HepG2 (cell line): ENCODE measurements at regions of chr20 and their contacts with region 1.

Region 1: DNA sequence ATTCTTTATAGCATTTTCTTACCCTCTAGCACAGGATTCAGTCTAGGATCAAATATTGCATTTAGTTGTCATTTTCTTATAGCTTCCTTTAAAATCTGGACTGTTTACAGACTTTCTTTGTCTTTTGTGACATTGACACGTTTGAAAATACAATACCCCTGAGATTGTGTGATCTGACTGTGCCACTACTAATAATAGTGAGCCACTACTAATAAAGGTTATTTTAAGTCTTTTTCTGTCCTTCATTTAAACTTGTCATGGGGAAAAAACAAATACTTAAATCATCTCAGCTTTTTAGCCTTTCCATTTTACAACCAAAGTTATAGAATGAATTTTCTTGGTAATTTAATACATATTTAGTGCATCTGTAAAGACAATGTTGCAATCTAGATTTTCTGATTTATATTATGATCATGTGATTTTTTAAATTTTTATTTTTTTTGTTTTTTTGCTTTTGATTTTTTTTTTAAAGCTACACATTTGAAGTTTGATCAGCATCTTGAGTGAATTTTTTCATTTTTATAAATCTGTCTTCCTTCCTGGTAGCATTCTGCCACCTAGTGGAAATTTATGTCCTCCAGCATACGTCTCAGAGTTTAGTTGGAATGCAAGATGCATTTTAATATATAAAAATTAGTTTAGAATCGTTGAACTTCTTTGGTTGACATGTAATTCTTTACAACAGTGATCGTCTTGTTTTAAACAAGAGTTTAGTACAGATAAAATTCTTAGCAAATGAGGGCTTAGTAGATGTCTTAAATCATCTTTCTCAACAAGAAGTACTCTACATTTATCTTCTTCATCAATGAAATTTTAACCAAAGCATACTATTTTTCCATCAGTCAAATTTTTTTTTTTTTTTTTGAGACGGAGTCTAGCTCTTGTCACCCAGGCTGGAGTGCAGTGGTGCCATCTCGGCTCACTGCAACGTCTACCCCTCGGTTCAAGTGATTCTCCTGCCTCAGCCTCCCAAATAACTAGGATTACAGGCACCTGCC is 119.4 kb downstream of the NCOA3 start:
- DNase-seq: peak; percentile 66
- ATAC-seq: 0 out of 3 replicates have a peak, but pooled peaks have one; percentile 33
- H3K4me3 ChIP-seq: no peak overlapping the region
- H3K27ac ChIP-seq: no peak overlapping the region
- H3K4me1 ChIP-seq: no peaks in the 10 kb centered on the region
- H3K27me3 ChIP-seq: no peaks in the 10 kb centered on the region
- CTCF ChIP-seq: peak; percentile 72
- EP300 ChIP-seq: no peak
- POLR2A ChIP-seq: no peak
- RAD21 ChIP-seq: peak; percentile 79

Region 2: GRCh38 chr20:47196091-47197081 is 424.7 kb before region 1 on chr20:
- CTCF ChIA-PET with region 1: interaction called, 7 read pairs
- POLR2A ChIA-PET with region 1: no interaction called
- in situ Hi-C with region 1: loop called (anchors 10 kb)
- intact Hi-C with region 1: loop called (anchors 2 kb)
- DNase-seq: peak; percentile 70
- ATAC-seq: peak; percentile 56
- H3K4me3 ChIP-seq: peak overlapping the region; percentile 15 to 64 (median 44); a peak in 5 of 6 replicates
- H3K27ac ChIP-seq: no peak overlapping the region
- H3K4me1 ChIP-seq: peaks cover 41% of the 10 kb centered on the region
- H3K27me3 ChIP-seq: peaks cover 0 to 7% of the 10 kb centered on the region in 2 experiments; a peak in 3 of 5 replicates
- CTCF ChIP-seq: peak; percentile 99
- EP300 ChIP-seq: no peak
- POLR2A ChIP-seq: no peak
- RAD21 ChIP-seq: peak; percentile 99

Region 3: GRCh38 chr20:47272893-47273590 is 348.1 kb before region 1 on chr20:
- CTCF ChIA-PET with region 1: interaction called, 3 read pairs
- POLR2A ChIA-PET with region 1: no interaction called
- in situ Hi-C with region 1: no loop called
- intact Hi-C with region 1: loop called (anchors 2 kb)
- DNase-seq: peak; percentile 78
- ATAC-seq: peak; percentile 63
- H3K4me3 ChIP-seq: no peak overlapping the region
- H3K27ac ChIP-seq: no peak overlapping the region
- H3K4me1 ChIP-seq: peaks cover 23% of the 10 kb centered on the region
- H3K27me3 ChIP-seq: no peaks in the 10 kb centered on the region
- CTCF ChIP-seq: peak; percentile 91
- EP300 ChIP-seq: no peak
- POLR2A ChIP-seq: no peak
- RAD21 ChIP-seq: peak; percentile 86

Region 4: GRCh38 chr20:47379433-47380150 is 241.5 kb before region 1 on chr20:
- CTCF ChIA-PET with region 1: interaction called, 9 read pairs
- POLR2A ChIA-PET with region 1: no interaction called
- in situ Hi-C with region 1: no loop called
- intact Hi-C with region 1: loop called (anchors 5 kb)
- DNase-seq: no peak
- ATAC-seq: peak; percentile 9; the same call in 2 of the 3 replicates
- H3K4me3 ChIP-seq: no peak overlapping the region
- H3K27ac ChIP-seq: no peak overlapping the region
- H3K4me1 ChIP-seq: peaks cover 45% of the 10 kb centered on the region
- H3K27me3 ChIP-seq: no peaks in the 10 kb centered on the region
- CTCF ChIP-seq: no peak
- EP300 ChIP-seq: no peak
- POLR2A ChIP-seq: no peak
- RAD21 ChIP-seq: no peak

Region 5: DNA sequence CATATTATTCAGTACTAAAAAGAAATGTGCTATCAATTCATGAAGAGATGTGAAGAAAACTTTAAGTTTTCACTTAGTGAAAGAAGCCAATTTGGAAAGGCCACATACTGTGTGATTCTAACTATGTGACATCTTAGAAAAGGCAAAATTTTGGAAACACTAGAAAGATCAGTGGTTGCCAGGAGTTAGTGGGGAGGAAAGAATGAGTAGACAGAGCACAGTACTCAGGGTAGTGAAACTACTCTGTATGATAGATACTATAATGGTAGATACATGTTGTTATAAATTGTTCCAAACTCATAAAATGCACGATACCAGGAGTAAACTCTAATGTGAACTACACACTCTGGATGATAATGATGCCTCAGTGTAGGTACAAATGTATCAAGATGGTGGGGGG is 105.3 kb before region 1 on chr20:
- CTCF ChIA-PET with region 1: interaction called, 11 read pairs
- POLR2A ChIA-PET with region 1: no interaction called
- in situ Hi-C with region 1: loop called (anchors 5 kb)
- intact Hi-C with region 1: loop called (anchors 5 kb)
- DNase-seq: no peak
- ATAC-seq: no peak
- H3K4me3 ChIP-seq: no peak overlapping the region
- H3K27ac ChIP-seq: no peak overlapping the region
- H3K4me1 ChIP-seq: peaks cover 38% of the 10 kb centered on the region
- H3K27me3 ChIP-seq: no peaks in the 10 kb centered on the region
- CTCF ChIP-seq: no peak
- EP300 ChIP-seq: no peak
- POLR2A ChIP-seq: no peak
- RAD21 ChIP-seq: no peak

Region 6: GRCh38 chr20:47521059-47521808 is 99.9 kb before region 1 on chr20:
- CTCF ChIA-PET with region 1: interaction called, 11 read pairs
- POLR2A ChIA-PET with region 1: no interaction called
- in situ Hi-C with region 1: loop called (anchors 5 kb)
- intact Hi-C with region 1: loop called (anchors 5 kb)
- DNase-seq: no peak
- ATAC-seq: peak; percentile 67
- H3K4me3 ChIP-seq: no peak overlapping the region
- H3K27ac ChIP-seq: no peak overlapping the region
- H3K4me1 ChIP-seq: 0 out of 2 replicates have a peak, but pooled peaks cover 7% of the 10 kb centered on the region
- H3K27me3 ChIP-seq: no peaks in the 10 kb centered on the region
- CTCF ChIP-seq: peak; percentile 77
- EP300 ChIP-seq: no peak
- POLR2A ChIP-seq: no peak
- RAD21 ChIP-seq: peak; percentile 62

Region 7: DNA sequence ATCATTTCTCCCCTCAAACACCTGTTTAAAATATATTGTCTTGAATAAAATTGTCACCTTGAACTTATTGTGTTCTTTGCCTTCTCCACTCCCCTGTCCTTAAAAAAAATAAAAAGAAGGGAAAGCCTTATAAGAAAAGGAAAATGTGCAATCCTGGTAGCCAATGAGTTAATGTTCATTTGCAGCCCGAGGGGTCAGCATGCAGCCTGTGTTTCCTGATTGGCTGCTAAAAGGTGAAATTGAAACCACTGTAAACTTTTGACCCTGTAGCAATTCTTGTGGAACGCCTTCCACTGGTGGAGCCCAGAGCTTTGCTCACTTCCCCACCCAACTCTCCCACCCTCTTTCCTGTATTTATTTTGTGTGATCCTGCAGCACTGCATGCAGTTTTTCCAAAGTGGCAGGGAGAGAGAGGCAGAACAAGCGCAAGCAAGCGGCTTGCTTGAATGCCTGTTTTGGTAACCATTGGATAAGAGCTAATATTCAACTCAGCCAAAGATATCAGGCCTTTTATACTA is 44.5 kb before region 1 on chr20:
- CTCF ChIA-PET with region 1: no interaction called
- POLR2A ChIA-PET with region 1: no interaction called
- in situ Hi-C with region 1: no loop called
- intact Hi-C with region 1: loop called (anchors 5 kb)
- DNase-seq: peak; percentile 97
- ATAC-seq: peak; percentile 98
- H3K4me3 ChIP-seq: peak overlapping the region; percentile 22 to 49 (median 44); a peak in 4 of 6 replicates
- H3K27ac ChIP-seq: peak overlapping the region; percentile 51
- H3K4me1 ChIP-seq: peaks cover 97% of the 10 kb centered on the region
- H3K27me3 ChIP-seq: no peaks in the 10 kb centered on the region
- CTCF ChIP-seq: peak; percentile 31
- EP300 ChIP-seq: peak; percentile 70 to 72
- POLR2A ChIP-seq: peak; percentile 41 to 48; a peak in 2 of 4 replicates
- RAD21 ChIP-seq: no peak

Region 8: GRCh38 chr20:47767972-47768794 is 147.1 kb after region 1 on chr20:
- CTCF ChIA-PET with region 1: no interaction called
- POLR2A ChIA-PET with region 1: no interaction called
- in situ Hi-C with region 1: no loop called
- intact Hi-C with region 1: no loop called
- DNase-seq: no peak
- ATAC-seq: peak; percentile 22
- H3K4me3 ChIP-seq: no peak overlapping the region
- H3K27ac ChIP-seq: no peak overlapping the region
- H3K4me1 ChIP-seq: peaks cover 8% of the 10 kb centered on the region
- H3K27me3 ChIP-seq: no peaks in the 10 kb centered on the region
- CTCF ChIP-seq: no peak
- EP300 ChIP-seq: no peak
- POLR2A ChIP-seq: no peak
- RAD21 ChIP-seq: no peak